Activated T-helper 1 cell treated with anti-CD3 and anti-CD28 coated beads, Interleukin-12 subunit alpha, Interleukin-12 subunit beta, Interleukin-2, Interleukin-4 antibody, amounts not matched to agents 30 ng/mL and 10 ng/mL and 1 ng/mL, durations not matched to agents 14 hours and 24 hours and 36 hours (primary cell): ENCODE measurements at regions of chr14 and their contacts with region 1.

Region 1: GRCh38 chr14:95123891-95124579 is 33.3 kb downstream of the DICER1 start:
- DNase-seq: no peak
- H3K4me3 Mint-ChIP-seq: no peak overlapping the region
- H3K27ac Mint-ChIP-seq: no peak overlapping the region
- H3K4me1 Mint-ChIP-seq: peaks cover 10% of the 10 kb centered on the region
- H3K27me3 Mint-ChIP-seq: no peaks in the 10 kb centered on the region

Region 2: DNA sequence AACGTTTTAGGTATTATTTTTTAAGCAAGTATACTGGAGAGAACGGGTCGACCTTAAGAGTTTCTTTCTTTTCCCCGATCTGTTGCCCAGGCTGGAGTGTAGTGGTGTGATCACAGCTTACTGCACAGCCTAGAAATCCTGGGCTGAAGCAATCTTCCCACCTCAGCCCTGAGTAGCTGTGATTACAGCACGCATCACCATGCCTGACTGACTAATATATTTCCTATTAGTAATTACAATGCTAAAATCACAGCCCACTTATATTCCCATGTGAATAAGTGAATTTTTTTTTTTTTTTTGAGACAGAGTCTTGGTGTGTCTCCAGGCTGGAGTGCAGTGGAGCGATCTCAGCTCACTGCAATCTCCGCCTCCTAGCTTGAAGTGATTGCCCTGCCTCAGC is 17.1 kb before region 1 on chr14:
- intact Hi-C with region 1: no loop called
- DNase-seq: no peak
- H3K4me3 Mint-ChIP-seq: no peak overlapping the region
- H3K27ac Mint-ChIP-seq: no peak overlapping the region
- H3K4me1 Mint-ChIP-seq: no peaks in the 10 kb centered on the region
- H3K27me3 Mint-ChIP-seq: no peaks in the 10 kb centered on the region

Region 3: DNA sequence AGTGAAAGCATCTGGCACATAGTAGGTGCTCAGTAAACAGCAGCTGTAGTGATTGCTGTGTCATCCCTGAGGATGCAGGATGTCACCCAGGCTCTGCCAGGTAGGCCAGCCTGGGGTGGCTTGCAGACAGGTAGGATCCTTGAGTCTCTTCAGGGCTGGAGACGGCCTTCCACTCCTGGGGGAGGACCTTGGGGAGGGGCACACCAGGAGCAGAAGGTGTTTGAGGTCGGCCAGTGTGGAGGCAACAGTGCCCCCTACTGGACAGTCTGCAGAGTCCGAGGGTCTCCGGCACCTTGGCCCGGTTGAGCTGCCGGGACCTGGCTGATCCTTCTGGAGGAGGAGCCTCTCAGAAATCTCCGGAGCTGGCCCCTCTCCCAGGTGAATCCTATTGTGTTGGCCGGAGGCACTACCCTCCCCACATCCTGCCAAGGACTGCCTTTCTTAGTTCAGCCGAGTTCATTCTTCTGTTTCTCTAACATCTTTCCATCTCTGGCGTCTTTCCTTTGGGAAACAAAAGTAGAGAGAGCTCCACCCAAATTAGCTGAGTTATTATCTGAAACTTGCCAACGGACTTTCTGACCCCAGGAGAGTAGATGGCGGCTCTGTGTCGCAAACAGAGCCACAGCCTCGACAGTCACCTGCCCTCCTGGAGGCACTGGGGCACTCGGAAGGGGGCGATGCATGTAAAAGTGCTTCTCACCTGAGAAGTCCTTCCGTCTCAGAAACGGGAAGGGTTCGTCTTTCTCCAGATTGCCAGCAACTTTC is 237.5 kb after region 1 on chr14:
- intact Hi-C with region 1: loop called (anchors 10 kb)
- DNase-seq: no peak
- H3K4me3 Mint-ChIP-seq: no peak overlapping the region
- H3K27ac Mint-ChIP-seq: no peak overlapping the region
- H3K4me1 Mint-ChIP-seq: no peaks in the 10 kb centered on the region
- H3K27me3 Mint-ChIP-seq: peaks cover 40% of the 10 kb centered on the region